Pancreas (tissue), 10 donors: ENCODE measurements at regions of chr22 and their contacts with region 1.

Region 1: DNA sequence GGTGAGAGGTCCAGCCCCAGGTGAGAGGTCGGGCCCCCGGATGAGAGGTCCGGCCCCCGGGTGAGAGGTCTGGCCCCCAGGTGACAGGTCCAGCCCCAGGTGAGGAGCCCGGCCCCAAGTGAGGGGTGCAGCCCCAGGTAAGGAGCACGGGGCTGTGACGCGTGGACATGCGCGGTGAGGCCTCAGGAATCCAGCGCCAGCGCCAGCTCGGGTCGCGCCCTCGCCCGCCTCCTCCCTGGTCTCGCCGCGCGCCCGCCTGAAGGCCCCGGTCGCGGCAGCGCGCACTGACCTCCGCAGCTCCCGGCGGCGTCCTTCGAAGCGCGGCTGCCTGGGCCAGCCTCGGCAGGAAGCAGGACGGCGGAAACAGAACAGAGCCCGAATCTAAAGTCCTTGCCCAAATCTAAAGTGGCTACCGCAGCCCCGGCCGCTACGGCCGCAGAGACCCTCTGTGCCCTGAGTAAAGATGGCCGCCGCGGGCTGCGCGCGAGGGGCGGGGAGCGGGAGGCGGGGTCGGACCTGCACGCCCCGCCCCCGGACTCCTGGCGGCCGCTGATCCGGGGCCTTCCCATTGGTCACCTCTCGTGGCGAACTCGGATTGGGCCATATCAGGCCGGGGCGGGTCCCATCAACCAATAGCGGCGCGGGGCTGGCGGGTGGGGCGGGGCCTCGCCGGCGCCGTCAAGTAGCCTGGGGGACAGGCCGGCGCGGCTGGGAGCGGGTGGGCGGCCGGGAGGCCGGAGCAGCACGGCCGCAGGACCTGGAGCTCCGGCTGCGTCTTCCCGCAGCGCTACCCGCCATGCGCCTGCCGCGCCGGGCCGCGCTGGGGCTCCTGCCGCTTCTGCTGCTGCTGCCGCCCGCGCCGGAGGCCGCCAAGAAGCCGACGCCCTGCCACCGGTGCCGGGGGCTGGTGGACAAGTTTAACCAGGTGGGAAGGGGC is at the starts of genes ALG12 and CRELD2:
- DNase-seq: peak; percentile 97 to 99 (median 97)
- ATAC-seq: peak; percentile 92 to 97 (median 94)
- H3K4me3 ChIP-seq: peak within 1 kb of the TSS; percentile 62 to 95 (median 84)
- H3K27ac ChIP-seq: peak within 1 kb of the TSS; percentile 87 to 92 (median 92)
- H3K4me1 ChIP-seq: peaks cover 0 to 12% (median 4%) of the 10 kb centered on the region in 3 donors
- H3K27me3 ChIP-seq: no peaks in the 10 kb centered on the region
- CTCF ChIP-seq: no peak
- total RNA-seq, gene ALG12: 7.4 to 13.1 (median 12.1) TPM
- total RNA-seq, gene CRELD2: 37.2 to 61.9 (median 54.1) TPM

Region 2: GRCh38 chr22:49502126-49502826 is 416.0 kb before region 1 on chr22:
- intact Hi-C with region 1: no loop called
- DNase-seq: no peak
- ATAC-seq: no peak
- H3K4me3 ChIP-seq: no peak overlapping the region
- H3K27ac ChIP-seq: no peak overlapping the region
- H3K4me1 ChIP-seq: no peaks in the 10 kb centered on the region
- H3K27me3 ChIP-seq: no peaks in the 10 kb centered on the region
- CTCF ChIP-seq: no peak

Region 3: GRCh38 chr22:49861642-49862495 is 56.4 kb before region 1 on chr22:
- intact Hi-C with region 1: loop called in 1 of 3 experiments (anchors 10 kb)
- DNase-seq: no peak
- ATAC-seq: no peak
- H3K4me3 ChIP-seq: no peak overlapping the region
- H3K27ac ChIP-seq: no peak overlapping the region
- H3K4me1 ChIP-seq: no peaks in the 10 kb centered on the region
- H3K27me3 ChIP-seq: no peaks in the 10 kb centered on the region
- CTCF ChIP-seq: no peak